ENCODE measurements at regions of chr19 and their contacts with region 1.

Region 1: DNA sequence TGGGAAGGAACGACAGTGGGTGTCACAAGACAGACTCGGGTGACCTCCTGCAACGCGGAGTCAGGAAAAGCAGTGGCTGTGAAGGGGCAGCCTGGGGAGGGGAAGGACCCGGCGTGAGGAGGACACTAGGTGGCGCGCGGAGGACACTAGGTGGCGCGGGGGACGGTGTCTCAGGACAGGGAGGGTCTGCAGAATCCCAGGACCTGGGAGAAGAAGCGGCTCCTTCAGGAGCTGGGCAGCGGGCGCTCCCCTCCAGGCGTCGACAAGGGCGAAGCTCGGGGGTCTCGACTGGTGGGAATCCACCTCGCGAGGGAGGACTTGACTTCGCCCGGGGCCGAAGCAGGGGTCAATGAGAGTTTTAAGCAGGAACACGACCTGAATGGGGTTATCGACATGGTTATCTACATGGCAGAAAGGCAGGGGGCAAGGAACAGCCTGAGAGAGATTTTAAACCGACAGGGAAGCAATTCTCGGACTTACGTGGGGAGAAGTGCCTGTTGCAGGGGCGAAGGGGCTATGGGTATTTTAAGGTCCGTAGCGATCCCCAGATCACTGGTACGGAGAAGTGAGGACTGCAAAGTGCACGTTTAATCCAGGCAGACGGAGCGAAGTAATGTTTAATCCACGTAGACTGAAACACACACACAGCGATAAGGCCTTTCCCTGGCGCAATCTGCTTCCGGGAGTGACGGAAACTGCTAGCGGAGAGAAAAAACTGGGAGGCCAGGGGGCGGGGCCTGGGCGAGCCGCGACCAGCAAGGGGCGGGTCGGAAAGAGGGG is at the start of gene ZNF616:
- DNase-seq: peak; percentile 95 to 99
- H3K4me3 ChIP-seq: peak within 1 kb of the TSS; percentile 65 to 79
- H3K27ac ChIP-seq: peak within 1 kb of the TSS; percentile 84 to 90
- H3K4me1 ChIP-seq: peaks cover 0 to 21% (median 8%) of the 10 kb centered on the region in 4 donors
- H3K27me3 ChIP-seq: no peaks in the 10 kb centered on the region
- CTCF ChIP-seq: peak; percentile 83 to 86

Region 2: GRCh38 chr19:52171321-52172169 is 32.1 kb after region 1 on chr19 and contains the start of gene ZNF836:
- intact Hi-C with region 1: loop called (anchors 1 kb)
- DNase-seq: peak; percentile 88 to 95
- H3K4me3 ChIP-seq: peak within 1 kb of the TSS; percentile 89 to 90
- H3K27ac ChIP-seq: peak within 1 kb of the TSS; percentile 89 to 93
- H3K4me1 ChIP-seq: peaks cover 6 to 17% (median 11%) of the 10 kb centered on the region in 4 donors
- H3K27me3 ChIP-seq: no peaks in the 10 kb centered on the region
- CTCF ChIP-seq: no peak

Region 3: GRCh38 chr19:52189735-52190486 is 50.5 kb after region 1 on chr19 and contains the start of gene PPP2R1A:
- intact Hi-C with region 1: loop called (anchors 2 kb)
- DNase-seq: peak; percentile 100
- H3K4me3 ChIP-seq: peak within 1 kb of the TSS; percentile 87 to 95
- H3K27ac ChIP-seq: peak within 1 kb of the TSS; percentile 97 to 100
- H3K4me1 ChIP-seq: peaks cover 0 to 54% (median 38%) of the 10 kb centered on the region in 4 donors
- H3K27me3 ChIP-seq: no peaks in the 10 kb centered on the region
- CTCF ChIP-seq: no peak

Region 4: DNA sequence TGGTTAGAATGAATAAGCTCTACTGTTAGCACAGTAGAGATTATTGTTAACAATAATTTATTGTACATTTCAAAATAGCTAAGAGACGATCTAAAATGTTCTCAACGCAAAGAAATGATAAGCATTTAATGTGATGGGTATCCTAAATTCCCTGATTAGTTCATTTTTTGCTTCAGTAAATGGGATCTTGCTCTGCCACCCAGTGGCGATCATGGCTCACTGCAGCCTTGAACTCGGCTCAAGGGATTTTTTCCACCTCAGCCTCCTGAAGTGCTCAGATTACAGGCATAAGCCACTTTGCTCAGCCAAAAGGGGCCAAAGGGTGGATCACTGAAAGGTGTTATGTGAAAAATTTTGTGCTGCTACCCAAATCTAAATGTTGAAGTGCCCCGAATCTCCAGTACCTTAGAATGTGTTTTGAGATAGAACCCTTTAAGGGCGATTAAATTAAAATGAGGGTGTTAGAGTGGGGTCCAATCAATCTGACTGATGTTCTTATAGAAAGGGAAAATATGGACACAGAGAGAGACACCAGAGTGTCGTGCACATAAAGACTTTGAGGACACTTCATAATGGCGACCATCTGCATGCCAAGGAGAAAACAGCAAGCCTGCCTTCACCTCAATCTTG is 98.4 kb after region 1 on chr19:
- intact Hi-C with region 1: loop called (anchors 2 kb)
- DNase-seq: peak; percentile 32 to 72
- H3K4me3 ChIP-seq: no peak overlapping the region
- H3K27ac ChIP-seq: no peak overlapping the region
- H3K4me1 ChIP-seq: no peaks in the 10 kb centered on the region
- H3K27me3 ChIP-seq: no peaks in the 10 kb centered on the region
- CTCF ChIP-seq: peak; percentile 81 to 92